ENCODE measurements at regions of chr12 and their contacts with region 1.

Region 1: GRCh38 chr12:54207484-54208294 is 18.9 kb upstream of the SMUG1 start:
- DNase-seq: no peak
- H3K4me3 ChIP-seq: no peak overlapping the region
- CTCF ChIP-seq: peak; percentile 99

Region 2: GRCh38 chr12:53701518-53702260 is 506.0 kb before region 1 on chr12:
- CTCF ChIA-PET with region 1: interaction called, 14 read pairs
- POLR2A ChIA-PET with region 1: no interaction called
- DNase-seq: no peak
- H3K4me3 ChIP-seq: no peak overlapping the region
- CTCF ChIP-seq: peak; percentile 96

Region 3: GRCh38 chr12:53974084-53975063 is 233.3 kb before region 1 on chr12 and contains the start of gene HOTAIR:
- CTCF ChIA-PET with region 1: interaction called, 23 read pairs
- POLR2A ChIA-PET with region 1: interaction called, 10 read pairs
- DNase-seq: no peak
- H3K4me3 ChIP-seq: peak within 1 kb of the TSS; percentile 76
- CTCF ChIP-seq: no peak

Region 4: DNA sequence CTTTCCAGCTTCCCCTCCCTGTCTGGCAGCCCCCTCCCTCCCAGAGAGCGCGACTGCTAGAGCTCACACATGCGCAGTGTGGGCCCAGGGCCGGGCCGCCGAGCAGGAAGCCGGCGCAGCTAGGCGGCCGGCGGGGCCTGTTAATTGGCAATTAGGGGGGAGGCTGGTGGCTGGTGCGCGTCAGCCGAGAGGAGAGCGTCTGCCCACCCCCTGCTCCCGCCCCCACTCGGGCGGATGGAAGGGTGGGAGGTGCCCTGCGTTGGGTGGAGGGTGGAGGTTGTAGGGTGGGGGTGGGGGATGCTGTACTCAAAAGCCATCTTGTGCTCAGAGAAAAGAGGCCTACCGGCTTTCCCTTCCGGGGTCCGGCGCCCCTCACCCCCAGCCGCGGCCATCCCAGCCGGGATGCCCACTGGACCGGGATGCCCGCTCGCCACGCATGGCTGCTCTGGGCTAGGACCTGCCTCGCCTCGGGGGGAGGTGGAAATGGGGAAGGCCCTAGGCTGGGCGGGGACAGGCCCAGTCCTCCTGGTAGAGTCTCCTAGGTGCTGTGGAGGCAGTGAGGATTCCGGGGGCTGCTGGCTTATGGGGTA is 189.7 kb before region 1 on chr12:
- CTCF ChIA-PET with region 1: interaction called, 908 read pairs
- POLR2A ChIA-PET with region 1: interaction called, 3 read pairs
- DNase-seq: peak; percentile 82
- H3K4me3 ChIP-seq: peak overlapping the region; percentile 88
- CTCF ChIP-seq: no peak

Region 5: GRCh38 chr12:54220092-54220557 is 12.4 kb after region 1 on chr12:
- CTCF ChIA-PET with region 1: interaction called, 192 read pairs
- POLR2A ChIA-PET with region 1: no interaction called
- DNase-seq: no peak
- H3K4me3 ChIP-seq: no peak overlapping the region
- CTCF ChIP-seq: peak; percentile 77

Region 6: DNA sequence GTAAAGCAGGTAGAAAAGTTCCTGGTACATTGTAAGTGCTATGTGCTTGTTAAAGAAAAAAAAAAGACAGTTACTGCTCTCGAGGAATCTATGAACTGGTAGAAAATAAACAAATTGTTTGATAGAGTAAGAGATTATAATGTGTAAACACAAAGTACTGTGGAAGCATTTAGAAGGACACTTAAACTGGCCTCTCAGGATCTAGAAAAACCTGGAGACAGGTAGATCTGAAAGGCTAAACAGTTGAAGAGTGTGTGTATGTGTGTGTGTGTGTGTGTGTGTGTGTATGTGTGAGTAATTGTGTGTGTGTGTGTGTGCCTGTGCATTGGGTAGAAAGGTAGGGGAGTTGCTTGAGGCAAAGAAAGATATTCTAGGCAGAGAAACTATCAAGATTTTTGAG is 304.8 kb after region 1 on chr12:
- CTCF ChIA-PET with region 1: no interaction called
- POLR2A ChIA-PET with region 1: no interaction called
- DNase-seq: no peak
- H3K4me3 ChIP-seq: no peak overlapping the region
- CTCF ChIP-seq: no peak